Activated CD8-positive, alpha-beta T cell treated with anti-CD3 and anti-CD28 coated beads, Interleukin-2, amount 10 ng/mL, durations not matched to agents 7 days and 5 days (primary cell): ENCODE measurements at regions of chr6 and their contacts with region 1.

Region 1: GRCh38 chr6:125956506-125957390 is at the start of gene HINT3:
- DNase-seq: peak; percentile 98
- ATAC-seq: peak; percentile 90
- H3K4me3 Mint-ChIP-seq: no peak within 1 kb of the TSS
- H3K27ac Mint-ChIP-seq: peak within 1 kb of the TSS; percentile 41
- H3K4me1 Mint-ChIP-seq: peaks cover 5% of the 10 kb centered on the region
- H3K27me3 Mint-ChIP-seq: peaks cover 10% of the 10 kb centered on the region
- total RNA-seq, gene HINT3: 8.0 to 9.1 TPM

Region 2: DNA sequence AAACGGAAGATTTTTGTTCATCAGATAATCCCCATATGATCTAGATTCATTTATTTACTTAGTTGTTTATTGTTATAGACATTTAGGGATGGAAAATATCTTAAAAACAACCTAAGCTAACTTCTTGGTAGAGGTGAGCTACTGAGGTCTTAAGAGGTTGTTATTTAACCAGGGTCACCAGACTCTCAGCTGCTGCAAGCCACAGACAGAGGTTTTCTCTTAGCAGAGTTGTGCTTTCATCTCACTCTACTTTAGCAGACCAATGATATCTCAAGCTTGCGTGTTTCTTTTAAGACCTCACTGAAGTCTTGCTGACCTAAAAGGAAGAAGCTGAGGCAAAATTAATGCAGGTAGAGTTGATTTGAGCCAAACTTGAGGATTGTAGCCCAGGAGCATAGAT is 122.4 kb before region 1 on chr6:
- CTCF ChIA-PET with region 1: interaction called, 14 read pairs
- POLR2A ChIA-PET with region 1: no interaction called
- DNase-seq: peak; percentile 34
- ATAC-seq: peak; percentile 80
- H3K4me3 Mint-ChIP-seq: no peak overlapping the region
- H3K27ac Mint-ChIP-seq: peak overlapping the region; percentile 32
- H3K4me1 Mint-ChIP-seq: peaks cover 51% of the 10 kb centered on the region
- H3K27me3 Mint-ChIP-seq: no peaks in the 10 kb centered on the region

Region 3: GRCh38 chr6:125899726-125900182 is 57.0 kb before region 1 on chr6:
- CTCF ChIA-PET with region 1: interaction called, 40 read pairs
- POLR2A ChIA-PET with region 1: no interaction called
- DNase-seq: no peak
- ATAC-seq: no peak
- H3K4me3 Mint-ChIP-seq: no peak overlapping the region
- H3K27ac Mint-ChIP-seq: no peak overlapping the region
- H3K4me1 Mint-ChIP-seq: peaks cover 21% of the 10 kb centered on the region
- H3K27me3 Mint-ChIP-seq: no peaks in the 10 kb centered on the region

Region 4: GRCh38 chr6:125918681-125919566 is 37.8 kb before region 1 on chr6:
- CTCF ChIA-PET with region 1: interaction called, 60 read pairs
- POLR2A ChIA-PET with region 1: interaction called, 15 read pairs
- DNase-seq: peak; percentile 64
- ATAC-seq: peak; percentile 93
- H3K4me3 Mint-ChIP-seq: peak overlapping the region; percentile 75
- H3K27ac Mint-ChIP-seq: peak overlapping the region; percentile 87
- H3K4me1 Mint-ChIP-seq: peaks cover 40% of the 10 kb centered on the region
- H3K27me3 Mint-ChIP-seq: no peaks in the 10 kb centered on the region

Region 5: DNA sequence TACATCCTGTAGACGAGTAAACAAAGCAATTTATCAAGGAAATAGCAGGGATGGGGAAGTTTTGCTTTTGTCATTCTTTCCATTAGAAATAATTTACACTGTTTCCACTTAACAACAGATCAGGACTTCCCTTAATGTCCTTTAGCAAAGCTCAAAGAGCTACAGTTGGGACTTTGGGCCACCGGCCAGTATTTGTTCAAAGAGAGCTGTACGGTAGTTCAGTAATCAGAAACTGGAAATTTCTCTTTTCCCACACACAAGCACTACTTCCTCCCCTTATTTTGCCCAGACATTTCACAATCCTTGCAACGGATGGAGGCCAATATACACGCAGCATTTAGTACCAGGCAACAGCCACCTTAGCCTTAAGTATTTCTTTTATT is 12.3 kb before region 1 on chr6:
- CTCF ChIA-PET with region 1: interaction called, 26 read pairs
- POLR2A ChIA-PET with region 1: no interaction called
- DNase-seq: no peak
- ATAC-seq: no peak
- H3K4me3 Mint-ChIP-seq: no peak overlapping the region
- H3K27ac Mint-ChIP-seq: no peak overlapping the region
- H3K4me1 Mint-ChIP-seq: no peaks in the 10 kb centered on the region
- H3K27me3 Mint-ChIP-seq: peaks cover 34% of the 10 kb centered on the region

Region 6: DNA sequence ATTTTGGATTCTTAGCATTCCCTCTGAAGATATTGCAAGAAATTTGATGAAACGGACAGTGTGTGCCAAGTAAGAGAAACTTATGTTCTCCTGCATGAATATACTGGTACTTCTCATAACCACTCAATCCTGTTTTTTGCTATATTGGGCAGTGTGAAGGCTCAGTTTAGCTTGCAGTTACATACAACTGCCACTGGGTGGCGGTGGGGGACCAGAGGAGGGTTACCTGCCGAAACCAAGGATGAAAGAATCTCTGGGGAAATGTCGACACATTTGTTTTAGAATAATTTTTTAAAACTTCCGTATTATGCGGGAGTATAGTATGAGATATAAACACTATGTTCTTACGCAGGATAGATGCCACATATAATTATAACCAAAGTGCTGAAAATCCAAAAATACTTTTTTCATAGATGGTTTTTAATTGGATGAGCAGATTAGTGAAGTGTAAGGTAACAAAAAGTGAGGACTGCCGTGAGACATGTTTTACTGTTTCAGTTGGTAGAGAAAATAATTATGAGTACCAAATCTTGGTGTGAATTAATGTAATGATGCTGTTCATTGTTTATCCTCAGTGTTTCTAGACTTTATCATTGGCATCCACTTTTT is 39.3 kb after region 1 on chr6:
- CTCF ChIA-PET with region 1: interaction called, 10 read pairs
- POLR2A ChIA-PET with region 1: no interaction called
- DNase-seq: peak; percentile 76
- ATAC-seq: peak; percentile 95
- H3K4me3 Mint-ChIP-seq: peak overlapping the region; percentile 42
- H3K27ac Mint-ChIP-seq: no peak overlapping the region
- H3K4me1 Mint-ChIP-seq: peaks cover 10% of the 10 kb centered on the region
- H3K27me3 Mint-ChIP-seq: no peaks in the 10 kb centered on the region

Region 7: DNA sequence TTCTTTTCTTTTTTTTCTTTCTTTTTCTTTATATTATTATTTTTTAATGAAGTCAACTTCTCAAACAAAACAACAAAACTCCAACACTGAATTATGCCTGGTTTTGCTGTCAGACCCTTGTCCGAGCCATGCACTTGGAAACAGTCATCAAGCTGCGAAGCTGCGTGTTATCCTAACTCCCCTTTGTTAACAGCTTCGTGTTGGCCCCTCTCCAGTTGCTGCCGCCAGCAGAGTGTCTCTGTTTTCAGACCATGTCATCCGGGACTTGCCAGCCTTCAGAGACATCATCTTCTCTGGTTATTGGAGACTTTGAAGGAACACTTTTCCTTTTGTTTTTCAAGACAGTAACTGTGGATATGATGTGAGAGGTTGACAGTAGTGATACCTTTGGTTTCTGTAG is 112.7 kb after region 1 on chr6:
- CTCF ChIA-PET with region 1: no interaction called
- POLR2A ChIA-PET with region 1: no interaction called
- DNase-seq: no peak
- ATAC-seq: no peak
- H3K4me3 Mint-ChIP-seq: no peak overlapping the region
- H3K27ac Mint-ChIP-seq: no peak overlapping the region
- H3K4me1 Mint-ChIP-seq: no peaks in the 10 kb centered on the region
- H3K27me3 Mint-ChIP-seq: no peaks in the 10 kb centered on the region